Esophagus muscularis mucosa (tissue), 4 donors: ENCODE measurements at regions of chr2 and their contacts with region 1.

Region 1: GRCh38 chr2:98282109-98282508 is 64.1 kb upstream of the CNGA3 start:
- DNase-seq: no peak
- H3K4me3 ChIP-seq: no peak overlapping the region
- H3K27ac ChIP-seq: no peak overlapping the region
- H3K4me1 ChIP-seq: no peaks in the 10 kb centered on the region
- H3K27me3 ChIP-seq: peaks cover 0 to 6% (median 0%) of the 10 kb centered on the region in 4 donors
- CTCF ChIP-seq: no peak
- EP300 ChIP-seq: no peak
- POLR2A ChIP-seq: no peak

Region 2: GRCh38 chr2:98308068-98308467 is 26.0 kb after region 1 on chr2:
- intact Hi-C with region 1: loop called (anchors 1 kb)
- DNase-seq: no peak
- H3K4me3 ChIP-seq: no peak overlapping the region
- H3K27ac ChIP-seq: no peak overlapping the region
- H3K4me1 ChIP-seq: no peaks in the 10 kb centered on the region
- H3K27me3 ChIP-seq: peaks cover 0 to 25% (median 0%) of the 10 kb centered on the region in 4 donors
- CTCF ChIP-seq: no peak
- EP300 ChIP-seq: no peak
- POLR2A ChIP-seq: no peak